ENCODE measurements at regions of chr4 and their contacts with region 1.

Region 1: DNA sequence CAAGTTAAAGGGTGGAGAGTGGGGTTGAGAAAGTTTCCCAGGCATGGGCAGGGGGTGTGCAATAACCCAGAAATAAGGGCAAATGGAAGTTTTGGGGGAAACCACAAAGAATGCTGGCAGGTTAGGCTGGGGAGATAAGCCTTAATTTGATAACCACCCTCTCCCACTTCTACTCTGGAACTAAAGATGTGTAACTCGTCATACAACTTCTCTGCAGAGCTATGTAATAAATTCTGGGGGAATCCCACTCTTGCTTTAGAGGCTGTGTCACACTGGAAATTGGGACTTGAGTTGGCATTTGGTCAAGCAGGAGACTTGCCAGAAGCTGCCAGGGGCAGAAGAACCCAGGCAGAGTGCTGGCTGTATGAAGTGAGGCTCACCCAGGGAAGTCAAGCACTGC is 170.9 kb upstream of the CPEB2 start:
- DNase-seq: no peak
- ATAC-seq: no peak
- H3K4me3 ChIP-seq: no peak overlapping the region
- H3K27ac ChIP-seq: no peak overlapping the region
- H3K4me1 ChIP-seq: no peaks in the 10 kb centered on the region
- H3K27me3 ChIP-seq: no peaks in the 10 kb centered on the region

Region 2: GRCh38 chr4:14621731-14622463 is 209.5 kb before region 1 on chr4:
- intact Hi-C with region 1: no loop called
- DNase-seq: peak in 1 of 3 donors; percentile 33
- ATAC-seq: peak; percentile 84 to 92
- H3K4me3 ChIP-seq: no peak overlapping the region
- H3K27ac ChIP-seq: peak overlapping the region; percentile 38
- H3K4me1 ChIP-seq: no peaks in the 10 kb centered on the region
- H3K27me3 ChIP-seq: no peaks in the 10 kb centered on the region

Region 3: DNA sequence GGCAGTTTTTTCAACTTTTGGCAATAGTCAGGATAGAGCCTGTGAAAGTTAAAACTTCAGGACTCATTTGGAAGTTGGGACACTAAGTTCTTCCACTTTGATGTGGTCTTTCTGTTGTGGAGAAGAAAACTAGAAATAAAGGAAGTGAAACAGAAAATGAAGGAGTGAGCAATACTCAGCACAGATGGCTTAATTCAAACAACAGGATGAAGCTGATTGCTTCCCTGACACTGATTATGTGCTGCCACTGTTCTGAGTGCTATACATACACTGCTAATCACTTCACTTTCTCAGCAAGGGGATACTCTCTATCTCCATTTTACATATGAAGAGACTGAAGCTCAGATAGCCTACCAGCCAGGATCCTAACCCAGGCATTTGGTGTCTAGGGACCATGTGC is 64.3 kb before region 1 on chr4:
- intact Hi-C with region 1: no loop called
- DNase-seq: no peak
- ATAC-seq: no peak
- H3K4me3 ChIP-seq: no peak overlapping the region
- H3K27ac ChIP-seq: no peak overlapping the region
- H3K4me1 ChIP-seq: no peaks in the 10 kb centered on the region
- H3K27me3 ChIP-seq: no peaks in the 10 kb centered on the region

Region 4: GRCh38 chr4:14924812-14925344 is 93.5 kb after region 1 on chr4:
- intact Hi-C with region 1: loop called in 1 of 4 experiments (anchors 5 kb)
- DNase-seq: no peak
- ATAC-seq: no peak
- H3K4me3 ChIP-seq: no peak overlapping the region
- H3K27ac ChIP-seq: no peak overlapping the region
- H3K4me1 ChIP-seq: peaks cover 3% of the 10 kb centered on the region
- H3K27me3 ChIP-seq: no peaks in the 10 kb centered on the region

Region 5: DNA sequence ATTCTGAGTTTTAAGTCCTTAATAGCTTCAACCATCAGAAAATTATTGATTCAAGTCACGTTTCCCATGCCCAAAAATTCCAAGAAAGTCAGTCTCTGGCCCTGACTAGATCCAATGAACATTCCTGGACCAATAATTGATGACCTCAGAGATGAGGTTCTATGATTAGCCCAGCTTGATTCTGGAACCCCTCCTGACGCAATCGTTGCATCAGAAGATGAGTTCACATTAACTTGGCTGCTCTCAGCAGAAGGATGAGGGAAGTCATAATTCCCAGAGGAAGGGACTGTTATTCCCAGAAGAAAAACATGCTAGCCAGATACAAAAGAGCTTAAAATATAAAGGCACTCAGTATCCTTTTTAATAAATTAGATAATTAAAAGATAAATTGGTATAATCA is 136.6 kb after region 1 on chr4:
- intact Hi-C with region 1: no loop called
- DNase-seq: no peak
- ATAC-seq: no peak
- H3K4me3 ChIP-seq: no peak overlapping the region
- H3K27ac ChIP-seq: no peak overlapping the region
- H3K4me1 ChIP-seq: no peaks in the 10 kb centered on the region
- H3K27me3 ChIP-seq: no peaks in the 10 kb centered on the region